ENCODE measurements at regions of chr2 and their contacts with region 1.

Region 1: GRCh38 chr2:44087036-44087713 is 81.5 kb upstream of the PPM1B start:
- DNase-seq: peak; percentile 62 to 86 (median 77)
- ATAC-seq: peak; percentile 97
- H3K4me3 ChIP-seq: peak overlapping the region; percentile 68
- H3K4me3 Mint-ChIP-seq: peak overlapping the region; percentile 60 to 92 (median 86)
- H3K27ac ChIP-seq: peak overlapping the region; percentile 77
- H3K27ac Mint-ChIP-seq: peak overlapping the region; percentile 79 to 98 (median 91)
- H3K4me1 ChIP-seq: peaks cover 0 to 9% of the 10 kb centered on the region in 2 donors
- H3K4me1 Mint-ChIP-seq: peaks cover 4 to 30% (median 15%) of the 10 kb centered on the region in 7 donors
- H3K27me3 ChIP-seq: no peaks in the 10 kb centered on the region
- H3K27me3 Mint-ChIP-seq: no peaks in the 10 kb centered on the region

Region 2: DNA sequence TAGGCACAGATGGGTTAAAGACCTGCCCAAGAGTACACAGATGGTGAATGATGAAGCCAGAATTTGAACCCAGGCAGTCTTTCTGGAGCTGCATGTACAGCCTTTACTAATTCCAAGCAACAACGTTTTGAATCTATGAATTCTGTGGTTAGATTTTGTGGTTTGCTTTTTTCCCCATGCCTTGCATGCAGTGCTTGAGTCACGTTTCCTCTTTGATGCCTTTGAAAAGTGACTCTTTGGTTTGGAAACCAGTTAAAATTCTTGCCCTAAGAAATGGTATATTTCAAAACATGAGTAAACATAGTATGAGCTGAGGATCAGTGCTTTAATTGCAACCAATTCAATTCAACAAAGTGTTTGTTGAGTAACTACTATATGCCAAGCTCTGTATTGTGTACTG is 33.3 kb after region 1 on chr2:
- CTCF ChIA-PET with region 1: interaction called, 4 read pairs
- POLR2A ChIA-PET with region 1: no interaction called
- intact Hi-C with region 1: loop called in 1 of 2 experiments (anchors 1 kb)
- DNase-seq: peak in 8 of 9 donors; percentile 27 to 82 (median 54)
- ATAC-seq: peak; percentile 84
- H3K4me3 ChIP-seq: no peak overlapping the region
- H3K4me3 Mint-ChIP-seq: peak overlapping the region in 6 of 10 donors; percentile 16 to 71 (median 50)
- H3K27ac ChIP-seq: no peak overlapping the region
- H3K27ac Mint-ChIP-seq: peak overlapping the region in 2 of 9 donors; percentile 20 to 46
- H3K4me1 ChIP-seq: peaks cover 5 to 7% of the 10 kb centered on the region in 2 donors
- H3K4me1 Mint-ChIP-seq: peaks cover 8 to 39% (median 20%) of the 10 kb centered on the region in 7 donors
- H3K27me3 ChIP-seq: no peaks in the 10 kb centered on the region
- H3K27me3 Mint-ChIP-seq: peaks cover 0 to 6% (median 0%) of the 10 kb centered on the region in 5 donors

Region 3: DNA sequence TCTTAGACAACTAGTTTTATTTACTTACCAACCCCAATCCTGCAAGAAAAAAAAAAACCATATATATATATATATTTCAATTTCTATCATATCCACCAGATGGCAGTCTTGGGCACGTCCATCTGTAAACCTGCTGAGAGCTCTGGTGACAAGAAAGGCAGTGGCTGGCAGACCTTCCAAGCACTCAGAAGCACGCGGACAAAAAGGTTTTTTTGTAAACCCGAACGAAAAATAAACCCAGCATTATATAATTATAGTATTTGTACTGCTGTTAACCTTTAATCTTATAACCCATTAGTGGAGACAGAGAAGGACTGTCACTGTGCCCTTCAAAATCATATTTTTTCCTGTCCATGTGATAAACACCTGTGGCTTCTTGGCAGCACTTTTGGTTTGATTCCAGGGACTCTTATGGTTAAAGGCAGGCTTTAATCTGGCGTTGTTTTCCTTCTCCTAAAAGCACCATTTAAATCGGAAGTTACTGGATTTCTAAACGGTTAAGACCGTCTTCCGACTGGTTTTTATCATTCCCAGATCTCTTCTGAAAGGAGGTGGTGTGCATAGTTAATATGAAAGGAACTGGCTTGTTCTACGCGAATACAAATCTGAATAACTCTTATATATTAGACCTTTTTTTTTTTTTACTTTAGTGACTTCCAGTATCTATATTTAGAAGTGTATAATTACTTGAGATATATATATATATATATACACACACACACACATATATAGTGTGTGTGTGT is 157.1 kb after region 1 on chr2:
- CTCF ChIA-PET with region 1: interaction called, 3 read pairs
- POLR2A ChIA-PET with region 1: interaction called, 3 read pairs
- intact Hi-C with region 1: loop called (anchors 1 to 2 kb)
- DNase-seq: peak; percentile 12 to 75 (median 64)
- ATAC-seq: peak; percentile 96
- H3K4me3 ChIP-seq: peak overlapping the region; percentile 55
- H3K4me3 Mint-ChIP-seq: peak overlapping the region; percentile 71 to 95 (median 87)
- H3K27ac ChIP-seq: peak overlapping the region; percentile 64
- H3K27ac Mint-ChIP-seq: peak overlapping the region in 8 of 9 donors; percentile 39 to 89 (median 74)
- H3K4me1 ChIP-seq: peaks cover 6 to 9% of the 10 kb centered on the region in 2 donors
- H3K4me1 Mint-ChIP-seq: peaks cover 7 to 41% (median 33%) of the 10 kb centered on the region in 7 donors
- H3K27me3 ChIP-seq: no peaks in the 10 kb centered on the region
- H3K27me3 Mint-ChIP-seq: peaks cover 0 to 7% (median 0%) of the 10 kb centered on the region in 5 donors

Region 4: DNA sequence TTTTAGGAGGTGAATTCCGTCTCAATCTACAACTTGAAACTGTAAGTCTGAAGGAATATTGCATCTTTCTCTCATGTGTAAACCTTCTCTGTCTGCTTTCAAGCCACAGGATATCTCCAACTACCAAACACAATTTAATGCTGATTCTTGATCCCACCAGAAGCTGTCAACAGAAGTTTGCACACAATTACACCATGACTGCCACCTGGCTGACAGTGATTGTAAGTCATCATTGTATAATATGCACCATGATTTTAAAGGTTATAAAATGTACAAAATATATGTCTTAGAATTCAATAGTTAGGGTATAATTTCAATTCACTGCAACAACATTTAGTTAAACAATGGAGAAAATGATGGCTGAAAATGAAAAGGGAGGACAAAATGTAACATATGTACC is 255.7 kb after region 1 on chr2:
- CTCF ChIA-PET with region 1: interaction called, 23 read pairs
- POLR2A ChIA-PET with region 1: interaction called, 4 read pairs
- intact Hi-C with region 1: loop called (anchors 1 kb)
- DNase-seq: peak in 7 of 9 donors; percentile 14 to 45 (median 33)
- ATAC-seq: peak; percentile 60
- H3K4me3 ChIP-seq: no peak overlapping the region
- H3K4me3 Mint-ChIP-seq: no peak overlapping the region
- H3K27ac ChIP-seq: no peak overlapping the region
- H3K27ac Mint-ChIP-seq: peak overlapping the region in 2 of 9 donors; percentile 5 to 26
- H3K4me1 ChIP-seq: no peaks in the 10 kb centered on the region
- H3K4me1 Mint-ChIP-seq: peaks cover 0 to 17% (median 0%) of the 10 kb centered on the region in 7 donors
- H3K27me3 ChIP-seq: no peaks in the 10 kb centered on the region
- H3K27me3 Mint-ChIP-seq: no peaks in the 10 kb centered on the region

Region 5: DNA sequence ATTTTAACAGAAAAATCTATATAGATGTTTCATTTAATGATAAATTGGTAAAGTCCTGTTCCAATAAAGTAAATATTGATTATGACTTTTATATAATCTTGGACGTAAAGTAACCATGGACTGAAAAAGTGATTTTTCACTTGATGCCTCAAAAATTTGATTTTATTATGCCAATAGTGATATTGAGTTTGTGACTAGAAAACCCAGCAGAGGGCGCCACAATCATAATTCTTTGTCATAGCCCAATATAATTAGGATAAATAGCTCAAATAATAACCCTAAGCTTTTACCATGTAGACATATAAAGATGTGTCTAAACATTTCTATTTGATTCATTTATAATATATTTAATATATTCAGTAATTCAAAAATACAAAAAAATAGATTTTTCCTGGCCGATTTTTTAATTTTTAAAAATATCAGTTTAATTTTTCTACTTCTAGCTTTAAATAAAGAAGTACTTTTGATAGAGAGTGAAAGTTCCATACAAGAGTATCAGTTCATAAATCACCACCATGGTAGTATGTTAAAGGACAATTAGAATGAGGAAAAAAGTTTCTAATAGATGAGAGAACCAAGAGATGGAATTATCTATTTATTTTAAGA is 305.3 kb after region 1 on chr2:
- CTCF ChIA-PET with region 1: no interaction called
- POLR2A ChIA-PET with region 1: no interaction called
- intact Hi-C with region 1: loop called (anchors 1 to 5 kb)
- DNase-seq: peak in 7 of 9 donors; percentile 10 to 34 (median 23)
- ATAC-seq: no peak
- H3K4me3 ChIP-seq: no peak overlapping the region
- H3K4me3 Mint-ChIP-seq: no peak overlapping the region
- H3K27ac ChIP-seq: no peak overlapping the region
- H3K27ac Mint-ChIP-seq: no peak overlapping the region
- H3K4me1 ChIP-seq: no peaks in the 10 kb centered on the region
- H3K4me1 Mint-ChIP-seq: peaks cover 0 to 19% (median 10%) of the 10 kb centered on the region in 7 donors
- H3K27me3 ChIP-seq: no peaks in the 10 kb centered on the region
- H3K27me3 Mint-ChIP-seq: no peaks in the 10 kb centered on the region

Region 6: GRCh38 chr2:44955593-44956392 is 868.6 kb after region 1 on chr2:
- CTCF ChIA-PET with region 1: interaction called, 3 read pairs
- POLR2A ChIA-PET with region 1: no interaction called
- intact Hi-C with region 1: loop called in 1 of 2 experiments (anchors 1 kb)
- DNase-seq: peak; percentile 25 to 80 (median 64)
- ATAC-seq: peak; percentile 79
- H3K4me3 ChIP-seq: no peak overlapping the region
- H3K4me3 Mint-ChIP-seq: peak overlapping the region in 7 of 10 donors; percentile 5 to 72 (median 35)
- H3K27ac ChIP-seq: no peak overlapping the region
- H3K27ac Mint-ChIP-seq: peak overlapping the region in 1 of 9 donors; percentile 62
- H3K4me1 ChIP-seq: peaks cover 0 to 10% of the 10 kb centered on the region in 2 donors
- H3K4me1 Mint-ChIP-seq: peaks cover 13 to 32% (median 20%) of the 10 kb centered on the region in 7 donors
- H3K27me3 ChIP-seq: no peaks in the 10 kb centered on the region
- H3K27me3 Mint-ChIP-seq: peaks cover 50 to 77% (median 65%) of the 10 kb centered on the region in 5 donors

Measured in naive thymus-derived CD4-positive, alpha-beta T cell (primary cell).